Thyroid gland (tissue), 4 donors: ENCODE measurements at regions of chr19 and their contacts with region 1.

Region 1: GRCh38 chr19:7799640-7800355 is 30.2 kb upstream of the EVI5L start:
- DNase-seq: peak; percentile 59 to 64
- H3K4me3 ChIP-seq: no peak overlapping the region
- H3K27ac ChIP-seq: no peak overlapping the region
- H3K4me1 ChIP-seq: no peaks in the 10 kb centered on the region
- H3K27me3 ChIP-seq: no peaks in the 10 kb centered on the region
- CTCF ChIP-seq: peak in 4 of 6 experiments; percentile 44 to 77 (median 54)
- POLR2A ChIP-seq: no peak

Region 2: GRCh38 chr19:7349961-7350711 is 449.7 kb before region 1 on chr19:
- intact Hi-C with region 1: loop called (anchors 10 kb)
- DNase-seq: no peak
- H3K4me3 ChIP-seq: no peak overlapping the region
- H3K27ac ChIP-seq: no peak overlapping the region
- H3K4me1 ChIP-seq: no peaks in the 10 kb centered on the region
- H3K27me3 ChIP-seq: no peaks in the 10 kb centered on the region
- CTCF ChIP-seq: no peak
- POLR2A ChIP-seq: no peak

Region 3: DNA sequence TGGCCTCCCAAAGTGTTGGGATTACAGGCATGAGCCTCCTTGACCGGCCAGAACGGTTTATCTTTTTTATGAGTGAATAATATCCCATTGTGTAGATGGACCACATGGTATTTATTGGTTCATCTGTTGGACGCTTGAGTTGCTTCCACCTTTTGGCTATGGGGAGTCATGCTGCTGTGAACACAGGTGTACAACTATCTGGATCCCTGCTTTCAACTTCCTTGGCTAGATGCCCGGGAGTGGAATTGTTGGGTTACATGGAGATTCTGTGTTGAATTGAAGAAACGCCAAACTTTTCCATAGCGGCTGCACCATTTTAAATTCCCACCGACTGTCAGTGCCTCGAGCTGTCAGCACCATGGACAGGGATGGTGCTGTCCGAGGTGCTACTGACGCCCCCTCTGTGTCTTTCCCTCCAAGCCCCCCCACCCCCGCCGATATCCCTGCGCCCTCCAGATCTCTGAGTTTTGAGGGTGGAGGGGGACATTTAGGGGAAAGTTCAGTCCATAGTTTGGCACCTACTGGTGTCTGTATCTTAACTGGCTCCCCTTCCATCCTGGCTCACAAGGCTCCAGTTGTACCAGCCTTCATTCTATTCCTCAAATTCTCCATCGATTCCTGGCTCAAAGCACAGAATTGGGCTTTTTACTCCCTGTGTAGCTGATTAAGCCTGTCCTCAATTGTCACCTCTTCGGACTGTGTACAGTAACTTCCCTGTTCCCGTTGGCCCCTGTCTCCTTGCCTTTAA is 237.0 kb before region 1 on chr19:
- intact Hi-C with region 1: loop called (anchors 5 kb)
- DNase-seq: no peak
- H3K4me3 ChIP-seq: no peak overlapping the region
- H3K27ac ChIP-seq: no peak overlapping the region
- H3K4me1 ChIP-seq: no peaks in the 10 kb centered on the region
- H3K27me3 ChIP-seq: no peaks in the 10 kb centered on the region
- CTCF ChIP-seq: no peak
- POLR2A ChIP-seq: no peak

Region 4: DNA sequence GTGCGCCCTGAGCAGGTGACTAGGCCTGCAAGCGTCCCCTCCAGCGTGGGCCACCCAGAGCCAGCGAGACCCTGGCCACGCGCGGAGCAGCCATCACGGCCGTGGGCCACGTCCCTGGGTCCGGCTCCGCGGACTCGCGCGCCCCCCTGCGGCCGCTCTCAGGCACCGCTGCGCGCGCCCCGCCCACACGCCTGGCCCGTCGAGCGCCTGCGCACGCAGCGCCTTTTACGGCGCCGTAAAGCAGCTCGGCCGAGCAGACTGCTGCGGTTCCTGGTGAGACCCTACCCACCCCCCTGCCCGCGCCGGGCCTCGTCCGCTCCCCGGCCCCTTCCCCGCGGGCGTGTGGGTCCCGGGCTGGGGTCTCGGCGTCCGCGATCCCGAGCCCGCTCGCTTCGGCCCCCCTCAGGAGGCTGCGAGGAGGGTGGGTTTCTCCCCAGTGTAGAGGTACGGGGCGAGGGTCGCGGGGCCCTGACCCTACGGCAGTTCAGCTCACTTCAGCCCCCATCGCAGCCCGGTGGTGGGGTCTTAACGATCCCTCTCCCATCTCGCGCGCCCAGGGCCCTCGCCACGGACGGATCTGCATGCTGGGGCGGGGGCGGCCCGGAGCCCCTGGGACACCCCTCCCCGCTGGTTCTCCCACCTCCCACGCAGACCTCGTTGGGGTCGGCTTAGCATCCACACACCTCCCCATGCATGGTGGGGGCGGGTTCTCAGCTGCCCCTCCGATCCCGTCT is 119.0 kb before region 1 on chr19 and contains the start of gene TRAPPC5:
- intact Hi-C with region 1: loop called (anchors 10 kb)
- DNase-seq: peak; percentile 81 to 82
- H3K4me3 ChIP-seq: peak within 1 kb of the TSS; percentile 84 to 99 (median 96)
- H3K27ac ChIP-seq: peak within 1 kb of the TSS; percentile 54 to 86 (median 66)
- H3K4me1 ChIP-seq: peaks cover 6 to 9% of the 10 kb centered on the region in 2 donors
- H3K27me3 ChIP-seq: no peaks in the 10 kb centered on the region
- CTCF ChIP-seq: peak; percentile 24 to 99 (median 98)
- POLR2A ChIP-seq: peak in 1 of 2 donors; percentile 65
- total RNA-seq, gene TRAPPC5: 46.8 to 111 (median 93.1) TPM

Region 5: GRCh38 chr19:7973883-7974282 is 174.1 kb after region 1 on chr19:
- intact Hi-C with region 1: no loop called
- DNase-seq: no peak
- H3K4me3 ChIP-seq: no peak overlapping the region
- H3K27ac ChIP-seq: no peak overlapping the region
- H3K4me1 ChIP-seq: peaks cover 0 to 4% of the 10 kb centered on the region in 2 donors
- H3K27me3 ChIP-seq: no peaks in the 10 kb centered on the region
- CTCF ChIP-seq: no peak
- POLR2A ChIP-seq: no peak